Colonic mucosa (tissue), 4 donors: ENCODE measurements at regions of chr16 and their contacts with region 1.

Region 1: GRCh38 chr16:54929090-54930004 is 1.3 kb upstream of the IRX5 start:
- DNase-seq: peak; percentile 100
- H3K4me3 ChIP-seq: peak overlapping the region; percentile 56
- H3K27ac ChIP-seq: no peak overlapping the region
- H3K4me1 ChIP-seq: peaks cover 16% of the 10 kb centered on the region
- H3K27me3 ChIP-seq: peaks cover 71% of the 10 kb centered on the region
- CTCF ChIP-seq: no peak

Region 2: DNA sequence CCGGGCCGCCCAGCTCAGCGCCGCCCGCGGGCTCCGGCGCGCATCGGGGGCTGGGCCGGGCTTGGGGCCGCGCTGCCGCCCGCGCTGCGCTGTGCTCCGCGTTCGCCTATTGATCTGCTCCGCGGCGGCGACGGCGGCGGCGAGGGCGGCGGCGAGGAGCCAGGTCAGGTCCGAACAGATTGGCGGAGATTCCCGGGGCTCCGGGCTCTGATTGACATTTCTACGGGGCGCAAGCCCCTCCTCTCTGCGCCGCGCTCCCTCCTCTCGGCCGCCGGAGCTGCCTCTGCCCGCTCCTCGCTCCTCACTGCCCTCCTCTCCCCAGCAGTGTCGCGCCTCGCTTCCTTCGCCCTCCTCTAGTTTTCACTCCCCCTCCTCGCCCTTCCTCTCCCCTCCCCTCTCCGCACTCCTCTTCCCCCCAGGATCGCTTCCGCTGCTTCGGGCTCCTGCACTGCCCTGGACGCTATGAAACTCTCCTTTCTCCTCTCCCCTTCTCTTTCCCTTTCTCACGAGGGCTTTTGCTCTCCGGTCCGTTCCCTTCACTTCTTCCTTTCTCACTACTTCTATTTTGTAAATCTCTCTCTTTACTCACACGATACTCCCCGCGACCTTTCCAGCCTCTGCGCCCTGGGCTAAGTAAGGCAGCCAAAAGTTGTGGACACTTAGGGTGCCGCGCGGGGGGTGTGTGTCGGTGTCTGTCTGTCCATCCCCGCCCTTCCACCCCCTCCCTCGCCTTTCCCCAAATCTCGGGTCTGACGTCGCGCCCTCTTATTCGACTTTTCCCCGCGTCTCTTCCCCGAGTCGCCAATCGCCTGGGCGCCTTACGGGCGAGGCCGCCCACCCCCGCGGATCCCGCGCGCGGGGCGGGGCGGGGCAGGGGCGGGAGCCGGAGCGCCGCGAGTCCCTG is 643.0 kb before region 1 on chr16 and contains the start of gene IRX3:
- intact Hi-C with region 1: loop called (anchors 10 kb)
- DNase-seq: no peak
- H3K4me3 ChIP-seq: peak within 1 kb of the TSS; percentile 22
- H3K27ac ChIP-seq: no peak within 1 kb of the TSS
- H3K4me1 ChIP-seq: peaks cover 11% of the 10 kb centered on the region
- H3K27me3 ChIP-seq: peaks cover 95% of the 10 kb centered on the region
- CTCF ChIP-seq: no peak
- total RNA-seq, gene IRX3: 0.54 TPM in 1 of 2 donors, not detected in the other

Region 3: GRCh38 chr16:55000595-55000994 is 71.2 kb after region 1 on chr16:
- intact Hi-C with region 1: no loop called
- DNase-seq: no peak
- H3K4me3 ChIP-seq: no peak overlapping the region
- H3K27ac ChIP-seq: no peak overlapping the region
- H3K4me1 ChIP-seq: no peaks in the 10 kb centered on the region
- H3K27me3 ChIP-seq: no peaks in the 10 kb centered on the region
- CTCF ChIP-seq: no peak